HEK293 (cell line): ENCODE measurements at regions of chr10 and their contacts with region 1.

Region 1: DNA sequence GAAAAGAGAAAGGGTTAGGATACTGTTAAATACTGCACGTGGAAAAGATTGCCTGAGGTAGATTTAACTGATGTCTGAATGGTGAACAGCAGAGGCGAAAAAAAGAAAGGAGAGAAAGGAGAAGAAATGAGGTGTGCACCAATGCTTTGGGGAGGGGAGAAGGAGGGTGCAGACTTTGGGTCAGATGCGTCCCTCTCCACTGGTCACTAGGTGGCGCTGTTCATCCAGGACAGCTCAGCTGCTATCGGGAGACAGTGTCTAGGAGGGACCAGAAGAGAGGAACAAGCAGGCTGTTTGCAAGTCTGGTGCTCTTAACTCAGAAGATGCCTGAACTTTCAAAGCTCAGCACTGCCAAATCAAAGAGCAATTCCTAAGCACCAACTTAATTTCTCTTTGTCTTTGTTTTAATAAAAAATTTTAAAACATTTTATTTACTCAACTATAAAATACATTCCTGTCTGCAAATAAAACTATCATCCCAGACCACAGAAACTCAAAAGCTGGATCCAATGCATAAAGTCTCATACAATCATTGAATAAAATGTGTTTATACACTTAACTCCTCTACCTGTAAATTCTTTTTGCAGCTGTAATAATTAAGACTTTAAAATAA is 83.9 kb upstream of the PDLIM1 start:
- H3K4me3 ChIP-seq: no peak overlapping the region
- H3K27ac ChIP-seq: no peak overlapping the region
- H3K4me1 ChIP-seq: no peaks in the 10 kb centered on the region
- CTCF ChIP-seq: peak; percentile 94

Region 2: GRCh38 chr10:95246579-95247051 is 128.1 kb before region 1 on chr10:
- CTCF ChIA-PET with region 1: interaction called, 34 read pairs
- POLR2A ChIA-PET with region 1: no interaction called
- H3K4me3 ChIP-seq: no peak overlapping the region
- H3K27ac ChIP-seq: no peak overlapping the region
- H3K4me1 ChIP-seq: no peaks in the 10 kb centered on the region
- CTCF ChIP-seq: peak; percentile 69

Region 3: DNA sequence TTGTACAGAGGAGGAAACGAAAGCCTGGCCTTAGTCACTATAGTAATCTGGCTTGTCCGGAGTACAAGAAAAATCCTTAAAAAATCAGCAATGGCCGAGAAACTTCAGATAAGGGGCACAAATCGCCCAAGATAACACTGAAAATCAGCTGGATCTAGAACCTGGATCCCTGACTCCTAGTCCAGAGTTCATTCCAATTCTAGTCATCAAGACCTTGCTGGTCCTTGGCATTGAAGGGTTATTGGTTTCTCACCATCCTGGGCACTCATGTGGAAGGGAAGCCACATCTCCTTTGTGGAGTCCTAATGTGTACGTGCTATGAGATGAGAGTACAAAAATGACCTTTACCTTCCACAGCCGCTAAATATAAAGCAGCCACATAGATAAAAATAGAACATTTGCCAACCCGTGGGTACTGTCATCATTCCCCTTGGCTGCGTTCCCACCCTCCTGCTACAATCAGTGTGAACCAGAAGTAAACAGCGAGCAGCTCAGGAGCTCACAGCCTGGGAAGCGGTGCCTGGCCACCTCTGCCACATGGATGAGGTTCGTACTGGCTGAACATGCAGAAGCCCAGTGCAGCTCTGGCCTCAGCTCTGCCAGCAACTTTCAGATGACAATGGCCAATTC is 32.1 kb after region 1 on chr10:
- CTCF ChIA-PET with region 1: interaction called, 42 read pairs
- POLR2A ChIA-PET with region 1: no interaction called
- H3K4me3 ChIP-seq: no peak overlapping the region
- H3K27ac ChIP-seq: no peak overlapping the region
- H3K4me1 ChIP-seq: no peaks in the 10 kb centered on the region
- CTCF ChIP-seq: no peak

Region 4: GRCh38 chr10:95430231-95430951 is 55.7 kb after region 1 on chr10:
- CTCF ChIA-PET with region 1: interaction called, 97 read pairs
- POLR2A ChIA-PET with region 1: no interaction called
- H3K4me3 ChIP-seq: no peak overlapping the region
- H3K27ac ChIP-seq: no peak overlapping the region
- H3K4me1 ChIP-seq: no peaks in the 10 kb centered on the region
- CTCF ChIP-seq: peak; percentile 87

Region 5: GRCh38 chr10:95601116-95601719 is 226.5 kb after region 1 on chr10:
- CTCF ChIA-PET with region 1: interaction called, 213 read pairs
- POLR2A ChIA-PET with region 1: no interaction called
- H3K4me3 ChIP-seq: no peak overlapping the region
- H3K27ac ChIP-seq: no peak overlapping the region
- H3K4me1 ChIP-seq: no peaks in the 10 kb centered on the region
- CTCF ChIP-seq: peak; percentile 87; the same call in 1 of the 2 replicates